Gastrocnemius medialis (tissue), 4 donors: ENCODE measurements at regions of chr12 and their contacts with region 1.

Region 1: DNA sequence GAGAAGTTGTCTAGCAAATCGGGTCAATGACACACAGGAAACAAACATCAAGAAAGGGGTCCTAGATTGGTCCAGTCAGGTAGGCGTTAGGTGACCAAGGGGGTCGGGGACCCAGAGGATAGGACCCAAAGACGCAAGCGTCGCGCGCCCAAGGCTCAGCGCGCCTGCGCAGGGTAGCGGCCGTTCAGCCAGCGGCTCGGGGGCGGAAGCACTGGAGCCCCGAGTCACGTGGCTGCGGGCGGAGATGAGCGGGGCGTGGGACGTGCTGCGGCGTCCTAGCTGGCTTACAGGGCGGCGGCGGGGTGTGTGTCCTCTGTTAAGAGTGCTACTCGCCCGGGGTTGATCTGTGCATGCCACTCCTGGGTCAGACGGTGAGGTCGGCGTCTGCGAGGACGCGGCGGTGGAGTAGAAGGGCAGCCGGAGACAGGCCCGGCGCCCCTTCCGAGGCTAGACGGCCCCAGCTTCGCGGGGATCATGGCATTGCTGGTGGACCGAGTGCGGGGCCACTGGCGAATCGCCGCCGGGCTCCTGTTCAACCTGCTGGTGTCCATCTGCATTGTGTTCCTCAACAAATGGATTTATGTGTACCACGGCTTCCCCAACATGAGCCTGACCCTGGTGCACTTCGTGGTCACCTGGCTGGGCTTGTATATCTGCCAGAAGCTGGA is at the start of gene SLC35E3:
- DNase-seq: peak; percentile 85 to 90
- ATAC-seq: peak; percentile 95 to 96
- H3K4me3 ChIP-seq: peak within 1 kb of the TSS; percentile 63 to 92 (median 79)
- H3K27ac ChIP-seq: peak within 1 kb of the TSS; percentile 63 to 84 (median 80)
- H3K4me1 ChIP-seq: peaks cover 21 to 26% of the 10 kb centered on the region in 2 donors
- H3K27me3 ChIP-seq: no peaks in the 10 kb centered on the region
- CTCF ChIP-seq: no peak
- POLR2A ChIP-seq: peak; percentile 54 to 69
- total RNA-seq, gene SLC35E3: 0.92 to 2.7 (median 1.6) TPM

Region 2: GRCh38 chr12:68331869-68332727 is 413.9 kb before region 1 on chr12 and contains the start of gene MDM1:
- in situ Hi-C with region 1: no loop called
- intact Hi-C with region 1: loop called (anchors 2 kb)
- DNase-seq: peak; percentile 96 to 97
- ATAC-seq: peak; percentile 100
- H3K4me3 ChIP-seq: peak within 1 kb of the TSS; percentile 71 to 87 (median 84)
- H3K27ac ChIP-seq: peak within 1 kb of the TSS; percentile 41 to 71 (median 69)
- H3K4me1 ChIP-seq: peaks cover 0 to 8% of the 10 kb centered on the region in 2 donors
- H3K27me3 ChIP-seq: no peaks in the 10 kb centered on the region
- CTCF ChIP-seq: peak in 1 of 5 experiments; percentile 6
- POLR2A ChIP-seq: peak in 1 of 2 donors; percentile 33
- total RNA-seq, gene MDM1: 1.6 to 6.8 (median 3.4) TPM

Region 3: GRCh38 chr12:69239352-69239921 is 493.4 kb after region 1 on chr12 and contains the start of gene CPSF6:
- in situ Hi-C with region 1: no loop called
- intact Hi-C with region 1: loop called (anchors 1 kb)
- DNase-seq: peak; percentile 90 to 91
- ATAC-seq: peak; percentile 95 to 96
- H3K4me3 ChIP-seq: peak within 1 kb of the TSS; percentile 80 to 94 (median 82)
- H3K27ac ChIP-seq: peak within 1 kb of the TSS; percentile 86 to 93 (median 89)
- H3K4me1 ChIP-seq: peaks cover 37 to 40% of the 10 kb centered on the region in 2 donors
- H3K27me3 ChIP-seq: no peaks in the 10 kb centered on the region
- CTCF ChIP-seq: peak in 1 of 5 experiments; percentile 25
- POLR2A ChIP-seq: peak; percentile 97 to 98
- total RNA-seq, gene CPSF6: 10.4 to 27.6 (median 18.6) TPM